Activated CD8-positive, alpha-beta T cell treated with anti-CD3 and anti-CD28 coated beads for 36 hours (primary cell): ENCODE measurements at regions of chr12 and their contacts with region 1.

Region 1: DNA sequence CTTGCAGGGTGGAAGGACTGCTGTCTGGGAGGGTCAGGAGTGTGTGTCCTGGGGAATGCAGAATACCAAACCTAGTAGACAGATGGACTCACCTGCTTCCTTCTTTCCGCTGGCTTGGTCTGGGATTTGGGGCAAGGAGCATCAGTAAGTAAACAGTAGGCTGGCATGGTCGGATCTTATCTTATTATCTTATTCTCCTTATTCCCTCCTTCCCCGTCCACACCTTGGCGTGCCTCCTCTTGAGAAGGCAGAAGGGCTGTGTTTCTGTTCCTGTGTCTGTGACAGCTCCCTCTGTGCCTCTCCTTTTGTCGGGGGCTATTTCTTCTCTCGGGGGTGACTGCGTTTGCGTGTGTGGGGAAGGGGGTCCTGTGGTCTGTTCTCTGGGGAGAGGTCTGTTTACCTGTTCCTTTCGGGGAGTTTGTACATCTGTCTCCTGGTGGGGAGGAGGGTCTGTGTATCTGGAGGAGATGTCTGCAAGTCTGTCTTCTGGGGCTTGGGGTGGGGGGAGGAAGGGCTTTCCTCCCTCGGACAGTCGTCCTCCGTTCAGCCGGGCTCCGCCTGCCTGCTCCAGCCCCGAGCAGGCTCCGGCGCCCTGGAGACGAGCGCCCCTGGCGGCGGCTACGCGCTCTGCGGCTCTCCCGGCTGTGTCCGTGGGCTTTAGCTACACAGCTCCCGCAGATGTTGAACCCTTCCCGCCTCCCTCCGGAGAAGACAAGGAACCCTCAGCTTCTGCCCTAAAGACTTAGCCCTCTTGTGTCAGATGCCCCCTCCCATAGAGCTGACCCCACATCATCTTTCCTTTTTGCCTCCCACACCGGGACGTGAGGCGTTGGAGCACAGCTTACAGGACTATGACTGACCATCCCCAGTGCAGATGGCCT is 4.3 kb downstream of the KRT86 start:
- DNase-seq: peak; percentile 78
- ATAC-seq: peak; percentile 100
- H3K4me3 Mint-ChIP-seq: no peak overlapping the region
- H3K27ac Mint-ChIP-seq: no peak overlapping the region
- H3K4me1 Mint-ChIP-seq: peaks cover 2% of the 10 kb centered on the region
- H3K27me3 Mint-ChIP-seq: peaks cover 28% of the 10 kb centered on the region
- CTCF ChIP-seq: peak; percentile 94

Region 2: GRCh38 chr12:52167954-52168717 is 110.6 kb before region 1 on chr12:
- CTCF ChIA-PET with region 1: interaction called, 3 read pairs
- POLR2A ChIA-PET with region 1: no interaction called
- intact Hi-C with region 1: loop called (anchors 5 kb)
- DNase-seq: no peak
- ATAC-seq: peak; percentile 28
- H3K4me3 Mint-ChIP-seq: no peak overlapping the region
- H3K27ac Mint-ChIP-seq: no peak overlapping the region
- H3K4me1 Mint-ChIP-seq: no peaks in the 10 kb centered on the region
- H3K27me3 Mint-ChIP-seq: no peaks in the 10 kb centered on the region
- CTCF ChIP-seq: no peak

Region 3: GRCh38 chr12:52213512-52214420 is 65.0 kb before region 1 on chr12:
- CTCF ChIA-PET with region 1: interaction called, 15 read pairs
- POLR2A ChIA-PET with region 1: no interaction called
- intact Hi-C with region 1: no loop called
- DNase-seq: peak; percentile 66
- ATAC-seq: peak; percentile 95
- H3K4me3 Mint-ChIP-seq: no peak overlapping the region
- H3K27ac Mint-ChIP-seq: no peak overlapping the region
- H3K4me1 Mint-ChIP-seq: no peaks in the 10 kb centered on the region
- H3K27me3 Mint-ChIP-seq: peaks cover 7% of the 10 kb centered on the region
- CTCF ChIP-seq: peak; percentile 86

Region 4: DNA sequence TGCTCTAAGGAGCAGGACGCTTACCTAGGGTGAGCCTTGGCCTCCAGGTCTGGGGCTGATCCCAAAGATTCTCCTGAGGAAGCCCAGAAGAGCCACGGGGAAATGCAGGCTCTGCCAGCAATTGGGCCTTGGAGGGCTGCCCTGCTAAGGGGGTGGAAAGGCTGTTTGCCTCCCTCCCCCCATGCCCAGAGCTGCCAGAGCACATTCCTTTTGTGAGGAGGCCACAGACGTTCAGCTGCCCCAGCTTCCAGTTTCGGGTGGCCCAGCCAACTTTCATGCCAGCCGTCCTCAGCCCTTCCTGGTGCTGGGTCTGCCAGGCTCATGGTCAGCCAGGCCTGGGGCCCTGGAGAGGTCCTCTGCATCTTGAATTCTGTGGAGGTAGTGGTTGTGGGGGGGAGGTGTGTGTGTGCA is 29.7 kb before region 1 on chr12:
- CTCF ChIA-PET with region 1: interaction called, 14 read pairs
- POLR2A ChIA-PET with region 1: no interaction called
- intact Hi-C with region 1: no loop called
- DNase-seq: no peak
- ATAC-seq: no peak
- H3K4me3 Mint-ChIP-seq: no peak overlapping the region
- H3K27ac Mint-ChIP-seq: no peak overlapping the region
- H3K4me1 Mint-ChIP-seq: peaks cover 26% of the 10 kb centered on the region
- H3K27me3 Mint-ChIP-seq: peaks cover 20% of the 10 kb centered on the region
- CTCF ChIP-seq: no peak

Region 5: GRCh38 chr12:52268212-52268611 is 10.6 kb before region 1 on chr12:
- CTCF ChIA-PET with region 1: interaction called, 69 read pairs
- POLR2A ChIA-PET with region 1: no interaction called
- intact Hi-C with region 1: no loop called
- DNase-seq: no peak
- ATAC-seq: no peak
- H3K4me3 Mint-ChIP-seq: no peak overlapping the region
- H3K27ac Mint-ChIP-seq: no peak overlapping the region
- H3K4me1 Mint-ChIP-seq: no peaks in the 10 kb centered on the region
- H3K27me3 Mint-ChIP-seq: peaks cover 12% of the 10 kb centered on the region
- CTCF ChIP-seq: no peak

Region 6: GRCh38 chr12:52307836-52308805 is 29.3 kb after region 1 on chr12:
- CTCF ChIA-PET with region 1: interaction called, 14 read pairs
- POLR2A ChIA-PET with region 1: no interaction called
- intact Hi-C with region 1: no loop called
- DNase-seq: peak; percentile 67
- ATAC-seq: peak; percentile 88
- H3K4me3 Mint-ChIP-seq: peak overlapping the region; percentile 22
- H3K27ac Mint-ChIP-seq: no peak overlapping the region
- H3K4me1 Mint-ChIP-seq: peaks cover 15% of the 10 kb centered on the region
- H3K27me3 Mint-ChIP-seq: peaks cover 54% of the 10 kb centered on the region
- CTCF ChIP-seq: peak; percentile 25